GM10248 (cell line): ENCODE measurements at regions of chr17 and their contacts with region 1.

Region 1: DNA sequence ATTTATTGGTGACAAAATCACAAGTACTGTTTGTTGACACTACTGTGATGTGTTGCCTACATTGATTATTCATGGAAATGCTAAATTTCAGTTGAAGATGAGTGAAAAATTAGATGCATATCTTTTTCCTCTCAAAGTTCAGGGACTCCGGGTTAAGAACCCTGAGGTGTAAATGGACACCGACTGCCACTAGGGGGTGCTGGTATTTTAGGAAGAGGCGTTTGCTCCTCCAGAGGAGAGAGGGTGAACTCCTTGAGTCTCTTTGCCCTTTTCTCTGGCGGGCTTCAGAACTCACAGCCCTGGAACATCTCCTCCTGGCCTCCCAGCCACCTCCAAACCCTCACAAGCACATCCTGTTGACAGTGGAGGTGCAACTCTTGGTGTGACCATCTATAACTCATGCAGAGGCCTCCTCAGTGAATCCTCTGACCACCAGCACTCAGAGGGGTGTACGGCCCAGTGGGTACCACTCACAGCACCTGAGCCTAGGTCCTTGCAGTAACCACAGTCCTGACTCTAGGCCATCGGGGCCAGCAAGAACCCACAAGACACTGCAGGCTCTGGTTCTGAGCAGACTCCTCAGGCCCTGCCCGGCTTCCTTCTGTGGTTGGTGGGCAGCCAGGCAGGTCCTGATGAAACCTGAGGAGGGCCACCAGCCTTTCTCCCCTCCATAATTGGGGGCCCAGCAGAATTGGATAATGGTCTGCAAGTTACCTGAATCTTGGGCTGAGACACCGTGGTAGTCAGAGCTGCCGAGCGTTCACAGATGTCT is 26.2 kb upstream of the PIK3R5 start:
- DNase-seq: peak; percentile 64
- CTCF ChIP-seq: peak; percentile 50

Region 2: GRCh38 chr17:8954339-8954738 is 37.4 kb before region 1 on chr17:
- CTCF ChIA-PET with region 1: interaction called, 37 read pairs
- POLR2A ChIA-PET with region 1: interaction called, 13 read pairs
- DNase-seq: peak; percentile 68
- CTCF ChIP-seq: no peak

Region 3: DNA sequence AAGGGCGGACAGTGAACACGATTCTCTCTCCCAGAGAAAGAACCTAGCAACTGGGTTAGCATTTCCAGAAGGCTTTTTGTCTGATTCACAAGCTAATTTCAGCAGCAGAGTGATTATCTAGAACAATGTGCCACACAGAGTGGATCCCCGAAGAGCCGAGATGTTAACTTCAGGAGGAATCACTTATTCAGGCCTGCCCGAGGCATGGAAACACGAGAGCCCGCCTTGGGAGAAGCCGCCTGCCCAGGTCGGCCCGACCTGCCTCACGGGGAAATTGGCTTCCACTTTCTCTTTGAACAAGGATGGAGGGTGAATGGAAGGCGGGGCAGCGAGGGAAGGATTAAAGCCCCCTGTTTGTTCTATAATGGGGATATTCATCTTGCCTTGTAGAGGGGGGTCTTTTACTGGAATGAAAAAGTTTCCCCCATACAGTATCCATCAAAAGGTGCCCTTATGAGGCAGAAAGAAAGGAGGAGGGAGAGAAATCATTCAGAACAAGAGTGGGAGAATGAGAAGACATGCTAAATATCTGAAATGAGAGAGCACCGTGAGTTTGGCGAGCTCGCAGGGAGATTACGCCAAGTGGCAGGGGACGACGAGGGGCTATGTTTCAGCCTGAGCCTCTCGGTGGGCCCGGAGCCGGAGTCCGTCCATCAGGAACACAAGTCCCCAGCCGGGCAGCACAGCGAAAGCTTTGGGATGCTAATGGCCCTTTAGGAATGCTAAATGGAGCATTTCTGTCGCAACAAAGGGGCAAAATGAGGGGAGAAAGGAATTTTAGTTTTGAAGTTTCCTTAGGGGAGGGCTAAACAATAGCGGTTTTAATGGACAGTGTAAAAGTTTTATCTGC is 62.7 kb after region 1 on chr17:
- CTCF ChIA-PET with region 1: no interaction called
- POLR2A ChIA-PET with region 1: no interaction called
- DNase-seq: no peak
- CTCF ChIP-seq: no peak

Region 4: DNA sequence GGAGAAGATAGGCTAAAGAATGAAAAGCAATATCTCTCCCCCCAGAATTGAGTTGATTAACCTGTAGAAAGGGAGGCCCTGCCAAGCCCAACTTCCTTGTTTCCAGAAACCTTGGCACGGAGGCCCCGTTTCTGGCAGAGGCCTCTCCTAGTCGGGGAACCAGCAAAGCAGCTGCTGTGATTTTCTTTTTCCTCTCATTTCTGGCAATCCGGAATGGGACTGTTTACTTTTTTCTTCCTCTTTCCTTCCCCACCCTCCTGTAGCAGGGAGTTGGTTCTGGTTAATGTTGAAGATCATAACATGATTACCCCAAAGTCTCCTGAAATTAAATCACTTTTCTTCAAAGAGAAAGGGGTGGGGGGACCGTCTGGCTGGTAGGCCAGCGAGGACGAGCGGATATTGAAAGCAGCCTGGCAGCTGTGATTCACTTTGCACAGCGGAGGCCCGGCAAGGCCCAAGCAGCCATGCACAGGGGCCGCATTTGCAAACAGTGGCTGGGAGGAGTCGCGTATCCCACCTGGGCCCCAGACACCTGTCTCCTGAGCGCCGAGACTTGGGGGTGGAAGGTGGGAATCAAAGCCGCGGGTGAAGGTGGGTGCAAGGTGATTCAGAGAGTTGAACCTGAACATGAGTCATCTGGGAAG is 81.1 kb after region 1 on chr17:
- CTCF ChIA-PET with region 1: no interaction called
- POLR2A ChIA-PET with region 1: no interaction called
- DNase-seq: no peak
- CTCF ChIP-seq: no peak